ENCODE measurements at regions of chr1 and their contacts with region 1.

Region 1: GRCh38 chr1:68120136-68120791 is 69.8 kb upstream of the DIRAS3 start:
- DNase-seq: no peak
- ATAC-seq: peak; percentile 83
- H3K4me3 ChIP-seq: no peak overlapping the region
- H3K27ac ChIP-seq: no peak overlapping the region
- H3K4me1 ChIP-seq: no peaks in the 10 kb centered on the region
- H3K27me3 ChIP-seq: no peaks in the 10 kb centered on the region
- CTCF ChIP-seq: peak; percentile 83

Region 2: GRCh38 chr1:67853704-67854103 is 266.6 kb before region 1 on chr1:
- intact Hi-C with region 1: loop called (anchors 10 kb)
- DNase-seq: peak; percentile 76
- ATAC-seq: peak; percentile 79
- H3K4me3 ChIP-seq: no peak overlapping the region
- H3K27ac ChIP-seq: no peak overlapping the region
- H3K4me1 ChIP-seq: peaks cover 7% of the 10 kb centered on the region
- H3K27me3 ChIP-seq: no peaks in the 10 kb centered on the region
- CTCF ChIP-seq: peak; percentile 65

Region 3: DNA sequence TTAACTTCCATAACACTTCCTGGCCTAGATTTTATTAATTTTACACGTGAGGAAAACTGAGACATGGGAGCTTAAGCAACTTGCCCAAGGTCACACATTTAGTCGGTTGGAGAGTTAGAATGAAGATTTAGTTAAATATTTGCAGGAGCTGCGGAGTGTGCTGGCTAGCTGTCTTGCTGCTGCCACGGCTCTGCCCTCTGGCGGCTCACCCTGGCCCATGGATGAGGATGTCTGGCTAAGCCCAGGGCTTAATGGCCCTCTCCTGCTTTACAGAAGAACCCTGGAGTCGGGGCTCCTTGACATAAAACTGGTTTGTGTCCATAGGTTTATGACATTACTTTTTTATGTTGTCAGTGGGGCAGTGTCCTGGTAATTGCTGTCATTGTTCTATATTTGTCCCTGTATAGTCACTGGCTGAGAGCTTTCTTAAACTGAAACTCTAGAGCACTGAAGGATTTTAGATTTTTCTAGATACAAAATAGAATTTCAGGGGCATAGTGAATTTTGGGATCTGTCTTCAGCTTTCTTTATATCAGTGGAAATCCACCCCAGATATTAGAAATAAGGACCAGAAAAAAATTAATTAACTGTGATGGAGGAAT is 200.9 kb after region 1 on chr1:
- intact Hi-C with region 1: loop called (anchors 10 kb)
- DNase-seq: peak; percentile 83
- ATAC-seq: peak; percentile 97
- H3K4me3 ChIP-seq: no peak overlapping the region
- H3K27ac ChIP-seq: no peak overlapping the region
- H3K4me1 ChIP-seq: no peaks in the 10 kb centered on the region
- H3K27me3 ChIP-seq: no peaks in the 10 kb centered on the region
- CTCF ChIP-seq: peak; percentile 68

Region 4: DNA sequence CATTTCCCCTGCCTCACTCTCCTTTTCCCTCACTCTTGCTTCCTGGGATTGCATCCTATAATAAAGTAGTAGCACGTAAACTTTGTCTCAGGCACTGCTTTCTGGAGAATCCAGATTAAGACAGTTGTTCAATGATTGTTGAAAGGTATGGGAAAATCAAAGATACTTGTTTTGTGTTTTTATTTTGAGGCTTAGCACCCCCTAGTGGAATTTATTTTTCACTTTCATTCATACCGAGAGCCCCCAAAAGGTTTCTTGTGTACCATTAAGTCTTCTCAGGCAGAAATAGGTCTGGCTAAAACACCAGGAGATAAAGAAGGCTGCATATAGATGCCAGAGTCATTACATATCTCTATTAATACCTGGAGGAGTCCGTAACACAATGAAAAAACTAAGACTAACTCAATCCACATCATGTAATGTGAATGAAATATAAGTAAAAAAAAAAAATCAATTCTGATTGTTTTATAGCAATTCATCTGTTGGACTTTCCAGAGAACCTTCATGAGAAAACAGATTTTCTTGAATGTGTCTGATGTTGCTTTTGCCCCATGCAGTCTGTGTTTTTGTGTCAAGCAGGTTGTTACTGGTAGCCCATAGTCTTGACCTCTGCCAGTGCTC is 226.0 kb after region 1 on chr1:
- intact Hi-C with region 1: loop called (anchors 5 kb)
- DNase-seq: no peak
- ATAC-seq: no peak
- H3K4me3 ChIP-seq: no peak overlapping the region
- H3K27ac ChIP-seq: no peak overlapping the region
- H3K4me1 ChIP-seq: no peaks in the 10 kb centered on the region
- H3K27me3 ChIP-seq: no peaks in the 10 kb centered on the region
- CTCF ChIP-seq: peak; percentile 51